ENCODE measurements at regions of chr5 and their contacts with region 1.

Region 1: GRCh38 chr5:157994906-157995519 is 136.1 kb upstream of the CLINT1 start:
- DNase-seq: peak; percentile 55
- ATAC-seq: peak; percentile 99
- H3K4me3 ChIP-seq: peak overlapping the region in 1 of 2 experiments; percentile 44; a peak in 3 of 4 replicates
- H3K27ac ChIP-seq: no peak overlapping the region
- H3K4me1 ChIP-seq: no peaks in the 10 kb centered on the region
- H3K27me3 ChIP-seq: no peaks in the 10 kb centered on the region; the same call in 1 of the 2 replicates
- CTCF ChIP-seq: peak; percentile 86

Region 2: DNA sequence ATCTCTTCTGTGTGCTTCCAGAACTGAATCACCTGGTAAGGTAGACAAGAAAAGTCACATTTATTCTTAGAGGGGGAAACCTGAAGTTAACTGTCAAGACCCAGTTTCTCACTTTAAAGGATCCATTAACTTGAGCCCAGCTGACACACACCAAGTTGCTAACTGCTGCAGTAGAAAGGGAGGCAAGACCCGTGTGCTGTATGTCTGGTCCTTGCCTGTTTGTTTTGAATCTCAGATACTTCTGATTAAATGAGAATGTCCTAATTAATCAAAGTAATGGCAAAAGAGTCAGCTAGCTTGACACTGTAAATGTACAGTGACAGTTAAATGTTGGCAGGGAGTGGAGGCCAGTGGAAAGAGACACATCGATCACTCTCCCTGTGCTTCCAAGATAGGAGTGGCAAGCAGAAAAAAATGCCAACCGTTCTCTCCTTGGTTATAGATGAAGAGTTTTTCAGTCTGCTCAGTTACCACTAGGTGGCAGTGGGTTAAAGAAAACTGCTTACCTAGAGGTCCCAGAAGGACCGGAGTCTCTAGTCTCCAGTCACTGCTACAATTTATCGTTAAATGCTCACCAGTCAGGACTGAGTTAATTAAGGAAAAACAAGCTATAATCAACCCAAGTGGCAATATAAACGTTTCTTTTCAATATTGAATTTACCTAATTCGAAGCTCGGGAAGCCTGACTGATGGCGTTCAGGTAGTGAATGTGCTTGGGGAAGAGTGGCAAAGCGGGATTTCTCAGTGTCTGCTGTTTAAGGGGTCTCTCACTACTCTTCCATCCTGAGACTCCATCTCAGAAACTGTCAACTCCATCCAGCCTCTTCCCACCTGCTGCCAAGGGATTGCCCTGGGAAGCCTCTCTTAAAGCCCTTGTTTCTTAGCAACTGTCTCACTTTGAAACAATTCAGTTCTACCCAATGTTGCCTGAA is 233.1 kb before region 1 on chr5:
- CTCF ChIA-PET with region 1: no interaction called
- POLR2A ChIA-PET with region 1: no interaction called
- in situ Hi-C with region 1: no loop called
- intact Hi-C with region 1: loop called (anchors 10 kb)
- DNase-seq: peak; percentile 35
- ATAC-seq: peak; percentile 97
- H3K4me3 ChIP-seq: no peak overlapping the region
- H3K27ac ChIP-seq: no peak overlapping the region
- H3K4me1 ChIP-seq: no peaks in the 10 kb centered on the region; the same call in 1 of the 2 replicates
- H3K27me3 ChIP-seq: no peaks in the 10 kb centered on the region
- CTCF ChIP-seq: peak; percentile 87

Region 3: DNA sequence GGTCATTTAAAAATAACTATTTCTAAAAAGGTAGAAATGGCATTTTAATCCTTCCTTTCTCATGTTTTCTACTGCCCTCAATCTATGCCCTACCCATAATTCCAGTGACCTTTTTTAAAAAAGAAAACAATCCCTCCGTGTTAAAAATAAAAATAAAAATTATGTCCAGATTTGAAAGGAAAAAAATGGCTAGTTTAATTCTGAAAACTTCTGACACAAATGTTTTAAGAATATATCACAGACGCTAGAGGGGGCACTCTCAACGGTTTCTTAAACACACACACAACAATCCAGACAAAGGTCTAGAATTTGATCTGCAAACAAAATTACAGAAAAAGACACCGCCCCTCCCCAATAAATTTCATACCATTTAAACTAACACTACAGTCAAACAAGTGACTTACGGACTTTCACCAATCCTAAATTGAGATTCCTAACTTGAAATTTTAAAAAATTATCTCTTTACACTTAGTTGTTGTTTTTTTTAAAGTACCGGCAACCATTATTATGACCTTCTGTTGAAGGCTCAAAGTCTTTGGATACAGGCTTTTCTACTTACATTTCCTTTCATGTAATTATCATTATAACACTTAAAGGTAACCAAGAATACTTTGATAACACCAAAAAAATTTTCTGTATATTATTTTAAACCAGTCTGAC is 174.3 kb before region 1 on chr5:
- CTCF ChIA-PET with region 1: no interaction called
- POLR2A ChIA-PET with region 1: no interaction called
- in situ Hi-C with region 1: no loop called
- intact Hi-C with region 1: loop called (anchors 2 kb)
- DNase-seq: no peak
- ATAC-seq: no peak
- H3K4me3 ChIP-seq: no peak overlapping the region
- H3K27ac ChIP-seq: no peak overlapping the region
- H3K4me1 ChIP-seq: peaks cover 4% of the 10 kb centered on the region; the same call in 1 of the 2 replicates
- H3K27me3 ChIP-seq: no peaks in the 10 kb centered on the region
- CTCF ChIP-seq: peak; percentile 69; the same call in 1 of the 2 replicates

Region 4: GRCh38 chr5:157947156-157947555 is 47.9 kb before region 1 on chr5:
- CTCF ChIA-PET with region 1: no interaction called
- POLR2A ChIA-PET with region 1: no interaction called
- in situ Hi-C with region 1: no loop called
- intact Hi-C with region 1: no loop called
- DNase-seq: no peak
- ATAC-seq: no peak
- H3K4me3 ChIP-seq: no peak overlapping the region
- H3K27ac ChIP-seq: no peak overlapping the region
- H3K4me1 ChIP-seq: 0 out of 2 replicates have a peak, but pooled peaks cover 2% of the 10 kb centered on the region
- H3K27me3 ChIP-seq: no peaks in the 10 kb centered on the region
- CTCF ChIP-seq: no peak

Region 5: GRCh38 chr5:158234323-158235158 is 239.5 kb after region 1 on chr5:
- CTCF ChIA-PET with region 1: no interaction called
- POLR2A ChIA-PET with region 1: no interaction called
- in situ Hi-C with region 1: no loop called
- intact Hi-C with region 1: no loop called
- DNase-seq: no peak
- ATAC-seq: no peak
- H3K4me3 ChIP-seq: no peak overlapping the region
- H3K27ac ChIP-seq: no peak overlapping the region
- H3K4me1 ChIP-seq: no peaks in the 10 kb centered on the region
- H3K27me3 ChIP-seq: no peaks in the 10 kb centered on the region
- CTCF ChIP-seq: no peak